ENCODE measurements at regions of chr17 and their contacts with region 1.

Region 1: DNA sequence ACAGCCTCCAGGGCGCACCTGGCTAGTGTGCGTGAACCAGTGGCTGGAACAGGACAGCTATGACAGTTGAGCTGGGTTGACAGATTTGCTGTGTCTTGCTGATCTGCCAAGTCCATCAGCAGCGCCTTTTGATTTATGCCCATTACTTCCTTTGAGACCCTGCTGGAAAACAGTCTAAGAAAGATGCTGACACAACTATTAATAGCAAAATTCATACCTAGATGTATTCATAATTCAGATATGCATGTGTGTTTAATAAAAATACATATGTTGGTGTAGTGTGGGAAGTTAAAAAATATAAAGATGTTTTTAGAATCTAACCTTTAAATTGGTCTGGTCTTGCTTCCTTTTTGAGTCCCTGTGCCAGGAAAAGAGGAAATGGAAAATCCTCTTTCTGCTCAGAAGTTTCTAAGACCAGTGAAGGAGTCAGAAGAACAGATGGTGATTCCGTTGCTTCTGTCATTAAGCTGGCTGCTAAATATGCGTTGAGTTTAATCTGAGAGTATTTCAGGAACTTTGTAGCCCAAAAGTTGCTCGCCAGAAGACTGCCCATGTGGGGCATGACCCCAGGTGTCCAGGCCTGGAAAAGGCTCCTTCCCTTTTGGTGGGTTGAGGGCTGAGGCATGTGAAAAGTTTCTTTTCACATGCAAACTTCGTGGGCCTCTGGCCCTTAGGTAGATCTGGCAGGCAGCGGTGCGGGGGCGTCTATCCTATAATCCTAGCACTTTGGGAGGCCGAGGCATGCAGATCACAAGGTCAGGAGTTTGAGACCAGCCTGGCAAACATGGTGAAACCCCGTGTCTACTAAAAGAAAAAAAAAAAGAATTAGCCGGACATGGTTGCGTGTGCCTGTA is 40.0 kb upstream of the ENDOV start:
- DNase-seq: no peak
- ATAC-seq: peak in 1 of 4 donors; percentile 14
- H3K4me3 ChIP-seq: no peak overlapping the region
- H3K27ac ChIP-seq: no peak overlapping the region
- H3K4me1 ChIP-seq: no peaks in the 10 kb centered on the region
- H3K27me3 ChIP-seq: no peaks in the 10 kb centered on the region
- CTCF ChIP-seq: no peak

Region 2: GRCh38 chr17:80339118-80339517 is 35.8 kb before region 1 on chr17:
- intact Hi-C with region 1: loop called in 1 of 2 experiments (anchors 5 kb)
- DNase-seq: no peak
- ATAC-seq: no peak
- H3K4me3 ChIP-seq: no peak overlapping the region
- H3K27ac ChIP-seq: no peak overlapping the region
- H3K4me1 ChIP-seq: no peaks in the 10 kb centered on the region
- H3K27me3 ChIP-seq: no peaks in the 10 kb centered on the region
- CTCF ChIP-seq: no peak

Measured in psoas muscle (tissue), 8 donors.